Caco-2 (cell line): ENCODE measurements at regions of chr9 and their contacts with region 1.

Region 1: DNA sequence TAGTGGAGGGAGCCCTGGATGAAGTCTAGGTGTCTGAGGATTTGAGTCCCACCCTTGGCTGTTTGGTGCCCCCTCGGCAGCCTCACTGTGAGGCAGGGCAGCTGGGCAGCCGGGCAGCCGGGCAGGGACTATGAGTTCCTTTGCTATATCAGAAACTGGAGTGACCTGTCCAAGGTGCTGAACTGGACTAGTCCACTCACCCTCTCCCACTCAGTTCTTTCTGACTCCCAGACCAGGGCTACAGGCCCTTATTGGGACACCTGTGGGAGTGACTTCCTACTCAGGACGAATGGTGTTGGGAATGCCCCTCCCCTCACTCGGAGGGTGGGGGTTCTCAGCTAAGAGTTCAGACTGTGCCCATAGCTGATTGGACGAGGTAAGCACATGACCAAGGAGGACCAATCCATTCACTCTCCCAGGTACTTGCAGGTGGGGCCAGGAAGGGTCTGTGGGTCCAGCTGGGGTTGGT is 34.1 kb upstream of the RAPGEF1 start:
- DNase-seq: peak; percentile 70 to 75
- H3K4me3 ChIP-seq: no peak overlapping the region
- H3K4me3 Mint-ChIP-seq: no peak overlapping the region
- H3K27ac Mint-ChIP-seq: no peak overlapping the region
- H3K4me1 ChIP-seq: no peaks in the 10 kb centered on the region
- H3K4me1 Mint-ChIP-seq: no peaks in the 10 kb centered on the region
- H3K27me3 ChIP-seq: no peaks in the 10 kb centered on the region
- H3K27me3 Mint-ChIP-seq: peaks cover 18% of the 10 kb centered on the region
- CTCF ChIP-seq: no peak

Region 2: DNA sequence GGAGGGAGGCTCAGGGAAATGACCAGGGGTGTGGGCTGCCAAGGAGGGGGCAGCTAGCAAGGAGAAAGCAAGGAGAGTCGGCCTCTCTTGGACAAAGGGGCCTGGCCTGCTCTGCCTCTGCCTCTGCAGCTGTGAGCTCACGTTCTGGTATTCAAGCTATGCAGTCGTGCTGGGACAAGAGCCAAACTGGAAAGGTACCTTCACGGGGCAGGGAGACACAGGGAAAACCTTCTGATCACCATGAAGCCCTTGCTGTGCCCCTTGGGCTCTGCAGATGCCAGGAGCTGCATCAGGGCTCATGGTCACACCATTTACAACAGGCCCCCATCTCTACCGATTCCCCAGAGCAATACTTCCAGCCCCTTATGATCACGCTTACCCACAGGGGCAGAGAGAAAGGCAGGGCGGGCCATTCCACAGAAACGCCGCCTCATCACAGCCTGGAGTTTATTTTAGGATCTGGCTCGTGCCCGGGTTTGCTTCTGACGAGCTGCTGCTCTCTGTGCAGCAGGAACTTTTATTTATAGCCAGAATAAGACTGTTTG is 165.4 kb before region 1 on chr9:
- CTCF ChIA-PET with region 1: no interaction called
- POLR2A ChIA-PET with region 1: no interaction called
- intact Hi-C with region 1: no loop called
- DNase-seq: peak; percentile 70 to 79
- H3K4me3 ChIP-seq: no peak overlapping the region
- H3K4me3 Mint-ChIP-seq: peak overlapping the region; percentile 26
- H3K27ac Mint-ChIP-seq: peak overlapping the region; percentile 50
- H3K4me1 ChIP-seq: peaks cover 38% of the 10 kb centered on the region
- H3K4me1 Mint-ChIP-seq: peaks cover 31% of the 10 kb centered on the region
- H3K27me3 ChIP-seq: no peaks in the 10 kb centered on the region
- H3K27me3 Mint-ChIP-seq: no peaks in the 10 kb centered on the region
- CTCF ChIP-seq: no peak

Region 3: GRCh38 chr9:131799177-131799823 is 25.4 kb after region 1 on chr9:
- CTCF ChIA-PET with region 1: no interaction called
- POLR2A ChIA-PET with region 1: no interaction called
- intact Hi-C with region 1: loop called (anchors 1 kb)
- DNase-seq: peak; percentile 68 to 83
- H3K4me3 ChIP-seq: no peak overlapping the region
- H3K4me3 Mint-ChIP-seq: no peak overlapping the region
- H3K27ac Mint-ChIP-seq: no peak overlapping the region
- H3K4me1 ChIP-seq: no peaks in the 10 kb centered on the region
- H3K4me1 Mint-ChIP-seq: no peaks in the 10 kb centered on the region
- H3K27me3 ChIP-seq: no peaks in the 10 kb centered on the region; the same call in 1 of the 2 replicates
- H3K27me3 Mint-ChIP-seq: peaks cover 19% of the 10 kb centered on the region
- CTCF ChIP-seq: no peak